ENCODE measurements at regions of chr3 and their contacts with region 1.

Region 1: DNA sequence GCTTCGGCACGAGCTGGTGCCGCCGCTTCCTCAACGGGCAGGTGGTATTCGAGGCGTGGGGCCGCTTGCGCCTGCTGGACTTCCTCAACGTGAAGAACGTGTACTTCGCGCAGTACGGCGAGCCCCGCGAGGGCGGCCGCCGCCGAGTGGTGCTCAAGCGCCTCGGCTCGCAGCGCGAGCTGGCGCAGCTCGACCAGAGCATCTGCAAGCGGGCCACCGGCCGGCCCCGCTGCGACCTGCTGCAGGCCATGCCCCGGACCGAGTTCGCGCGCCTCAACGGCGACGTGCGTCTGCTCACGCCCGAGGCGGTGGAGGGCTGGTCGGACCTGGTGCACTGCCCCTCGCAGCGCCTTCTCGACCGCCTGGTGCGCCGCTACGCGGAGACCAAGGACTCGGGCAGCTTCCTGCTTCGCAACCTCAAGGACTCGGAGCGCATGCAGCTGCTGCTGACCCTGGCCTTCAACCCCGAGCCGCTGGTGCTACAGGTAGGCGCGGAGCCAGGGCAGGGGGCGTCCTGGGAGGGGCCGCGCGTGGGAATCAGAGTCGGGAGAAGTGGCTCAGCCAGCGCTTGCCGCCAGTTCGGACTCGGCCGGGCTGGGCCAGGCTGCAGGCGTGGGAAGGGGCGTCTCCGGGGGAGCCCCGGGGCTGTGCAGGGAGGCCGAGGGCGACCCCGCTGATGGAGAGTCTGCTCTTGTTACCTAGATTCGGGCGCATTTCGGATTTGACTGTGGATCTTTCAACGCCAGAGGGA is 1.1 kb downstream of the DIPK2A start:
- DNase-seq: peak; percentile 74
- ATAC-seq: peak; percentile 15
- H3K4me3 Mint-ChIP-seq: peak overlapping the region; percentile 99
- H3K27ac Mint-ChIP-seq: peak overlapping the region; percentile 99
- H3K4me1 Mint-ChIP-seq: peaks cover 48% of the 10 kb centered on the region
- H3K27me3 Mint-ChIP-seq: no peaks in the 10 kb centered on the region
- CTCF ChIP-seq: no peak

Region 2: DNA sequence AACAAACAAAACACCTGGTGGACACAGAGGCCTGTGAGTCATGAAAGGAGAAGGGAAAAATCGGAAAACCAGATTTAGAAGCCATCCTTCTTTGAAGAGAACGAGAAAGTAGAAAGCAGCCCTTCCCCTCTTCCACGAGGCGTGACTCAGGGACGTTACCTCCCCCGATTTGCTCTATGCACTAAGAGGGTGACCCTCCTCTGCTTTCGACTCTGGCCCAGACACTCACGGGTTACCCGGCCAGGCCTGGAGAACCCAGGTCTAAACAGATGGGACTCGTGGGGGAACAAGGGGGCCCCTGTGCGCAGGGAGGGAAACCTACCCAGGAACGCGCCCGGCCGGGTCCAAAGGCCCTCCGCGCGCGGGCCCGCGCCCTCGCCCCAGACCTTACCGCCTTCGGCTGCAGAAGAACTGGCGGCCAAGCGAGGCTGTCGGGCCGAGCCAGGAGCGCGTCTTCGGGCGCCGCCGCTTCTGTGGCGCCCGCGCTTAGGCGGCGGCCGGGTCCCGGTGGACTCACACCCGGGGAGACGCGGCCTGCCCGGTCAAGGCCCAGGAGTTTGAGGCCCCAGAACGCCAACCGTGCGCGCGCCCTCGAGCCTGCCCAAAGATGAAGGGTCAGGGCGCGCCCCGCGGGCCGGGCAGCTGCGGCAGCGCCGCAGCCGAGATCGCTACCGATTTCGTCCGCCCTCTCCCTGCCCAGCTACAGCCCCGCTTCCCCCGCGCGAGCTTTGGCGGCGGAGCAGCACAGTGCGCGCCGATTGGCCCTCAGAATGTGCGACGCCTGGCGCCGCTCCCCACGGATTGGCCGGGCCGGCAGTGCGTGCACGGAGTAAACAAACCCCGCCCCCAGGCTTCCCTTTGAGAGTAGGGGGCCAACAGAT is 1823.6 kb before region 1 on chr3 and contains the start of gene TFDP2:
- CTCF ChIA-PET with region 1: no interaction called
- POLR2A ChIA-PET with region 1: no interaction called
- intact Hi-C with region 1: loop called (anchors 5 kb)
- DNase-seq: peak; percentile 78
- ATAC-seq: peak; percentile 99
- H3K4me3 Mint-ChIP-seq: peak within 1 kb of the TSS; percentile 86
- H3K27ac Mint-ChIP-seq: peak within 1 kb of the TSS; percentile 72
- H3K4me1 Mint-ChIP-seq: peaks cover 14% of the 10 kb centered on the region
- H3K27me3 Mint-ChIP-seq: no peaks in the 10 kb centered on the region
- CTCF ChIP-seq: no peak
- total RNA-seq, gene TFDP2: 20.0 and 23.1 TPM in 2 replicates

Region 3: DNA sequence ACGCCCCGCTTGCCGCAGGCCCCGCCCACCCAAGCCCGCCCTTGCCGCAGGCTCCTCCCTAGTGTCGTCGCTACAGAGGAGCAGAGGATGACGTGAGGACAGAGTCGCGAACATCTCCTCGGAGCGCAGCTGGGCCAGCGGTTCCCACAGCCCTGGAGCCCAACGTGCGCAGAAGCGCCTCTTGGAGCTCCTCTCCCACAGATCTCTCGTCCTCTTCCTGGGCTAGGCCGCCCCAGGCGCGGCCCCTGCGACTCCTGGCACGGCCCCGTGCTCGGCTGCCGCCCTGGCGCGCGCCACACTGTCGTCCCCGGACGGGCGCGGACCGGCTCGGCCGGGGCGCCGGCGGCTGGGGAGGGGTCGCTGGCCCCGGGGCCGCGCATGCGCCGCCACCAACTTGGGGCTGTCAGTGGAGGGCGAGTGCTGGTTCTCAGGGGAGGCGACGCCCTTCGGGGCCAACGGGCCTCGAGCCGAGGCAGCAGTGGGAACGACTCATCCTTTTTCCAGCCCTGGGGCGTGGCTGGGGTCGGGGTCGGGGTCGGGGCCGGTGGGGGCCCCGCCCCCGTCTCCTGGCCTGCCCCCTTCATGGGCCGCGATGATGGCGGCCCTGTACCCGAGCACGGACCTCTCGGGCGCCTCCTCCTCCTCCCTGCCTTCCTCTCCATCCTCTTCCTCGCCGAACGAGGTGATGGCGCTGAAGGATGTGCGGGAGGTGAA is 1248.6 kb before region 1 on chr3 and contains the start of gene TRPC1:
- CTCF ChIA-PET with region 1: no interaction called
- POLR2A ChIA-PET with region 1: no interaction called
- intact Hi-C with region 1: loop called (anchors 2 kb)
- DNase-seq: peak; percentile 54
- ATAC-seq: peak; percentile 95
- H3K4me3 Mint-ChIP-seq: peak within 1 kb of the TSS; percentile 87
- H3K27ac Mint-ChIP-seq: peak within 1 kb of the TSS; percentile 76
- H3K4me1 Mint-ChIP-seq: peaks cover 5% of the 10 kb centered on the region
- H3K27me3 Mint-ChIP-seq: peaks cover 22% of the 10 kb centered on the region
- CTCF ChIP-seq: no peak
- total RNA-seq, gene TRPC1: 1.2 and 1.3 TPM in 2 replicates

Region 4: GRCh38 chr3:143535994-143536784 is 436.5 kb before region 1 on chr3:
- CTCF ChIA-PET with region 1: no interaction called
- POLR2A ChIA-PET with region 1: no interaction called
- intact Hi-C with region 1: loop called (anchors 1 kb)
- DNase-seq: no peak
- ATAC-seq: peak; percentile 68
- H3K4me3 Mint-ChIP-seq: peak overlapping the region; percentile 64
- H3K27ac Mint-ChIP-seq: peak overlapping the region; percentile 79
- H3K4me1 Mint-ChIP-seq: peaks cover 61% of the 10 kb centered on the region
- H3K27me3 Mint-ChIP-seq: no peaks in the 10 kb centered on the region
- CTCF ChIP-seq: no peak

Region 5: DNA sequence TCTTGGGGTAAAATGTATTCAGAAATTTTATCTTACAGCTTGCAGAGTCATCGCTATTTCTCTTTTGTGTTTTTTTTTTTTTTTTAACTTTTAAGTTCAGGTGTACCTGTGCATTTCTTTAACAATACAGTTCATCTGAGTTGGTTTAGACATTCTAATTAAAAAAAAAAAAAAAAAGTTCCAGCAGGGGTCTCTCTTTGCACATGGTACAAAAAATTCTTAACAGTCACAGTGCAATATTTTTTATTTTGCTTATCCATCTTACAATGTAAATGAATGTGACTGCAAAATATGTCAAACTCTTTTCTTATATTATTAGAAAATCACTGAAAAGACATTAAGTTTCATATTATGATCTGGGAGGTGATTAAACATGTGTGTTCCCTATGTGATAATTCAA is 76.9 kb before region 1 on chr3:
- CTCF ChIA-PET with region 1: interaction called, 14 read pairs
- POLR2A ChIA-PET with region 1: interaction called, 3 read pairs
- intact Hi-C with region 1: loop called (anchors 1 kb)
- DNase-seq: no peak
- ATAC-seq: no peak
- H3K4me3 Mint-ChIP-seq: no peak overlapping the region
- H3K27ac Mint-ChIP-seq: no peak overlapping the region
- H3K4me1 Mint-ChIP-seq: no peaks in the 10 kb centered on the region
- H3K27me3 Mint-ChIP-seq: peaks cover 1% of the 10 kb centered on the region
- CTCF ChIP-seq: peak; percentile 56

Region 6: DNA sequence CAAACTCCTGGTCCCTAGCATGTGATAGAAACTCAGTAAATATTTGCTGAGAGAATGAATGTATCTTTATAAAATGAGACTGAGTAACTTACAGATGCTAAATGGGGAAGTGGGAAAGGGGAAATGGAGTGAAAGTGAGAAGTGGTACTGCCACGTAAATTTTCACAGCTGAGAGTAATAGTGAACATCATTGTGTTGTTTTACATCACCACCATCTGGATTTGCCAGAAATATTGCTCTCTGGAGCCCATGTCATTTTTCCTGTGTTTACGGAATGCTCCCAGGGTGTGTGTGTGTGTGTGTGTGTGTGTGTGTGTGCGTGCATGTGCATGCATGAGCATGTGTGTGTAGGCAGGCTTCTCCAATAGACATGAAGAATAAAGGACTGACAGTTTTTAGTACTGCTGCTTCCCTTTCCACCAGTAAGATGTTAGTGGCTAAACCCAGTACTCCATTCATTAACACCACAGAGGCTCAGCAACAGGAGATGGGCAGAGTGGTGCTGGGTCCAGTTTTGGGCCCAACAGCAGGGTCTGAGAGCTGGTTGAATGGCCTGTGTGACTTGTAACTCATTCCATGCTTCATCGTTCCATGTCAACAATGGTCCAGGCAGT is 56.2 kb after region 1 on chr3:
- CTCF ChIA-PET with region 1: interaction called, 8 read pairs
- POLR2A ChIA-PET with region 1: interaction called, 24 read pairs
- intact Hi-C with region 1: loop called (anchors 1 kb)
- DNase-seq: no peak
- ATAC-seq: peak; percentile 92
- H3K4me3 Mint-ChIP-seq: peak overlapping the region; percentile 44
- H3K27ac Mint-ChIP-seq: peak overlapping the region; percentile 82
- H3K4me1 Mint-ChIP-seq: peaks cover 35% of the 10 kb centered on the region
- H3K27me3 Mint-ChIP-seq: no peaks in the 10 kb centered on the region
- CTCF ChIP-seq: no peak

Region 7: DNA sequence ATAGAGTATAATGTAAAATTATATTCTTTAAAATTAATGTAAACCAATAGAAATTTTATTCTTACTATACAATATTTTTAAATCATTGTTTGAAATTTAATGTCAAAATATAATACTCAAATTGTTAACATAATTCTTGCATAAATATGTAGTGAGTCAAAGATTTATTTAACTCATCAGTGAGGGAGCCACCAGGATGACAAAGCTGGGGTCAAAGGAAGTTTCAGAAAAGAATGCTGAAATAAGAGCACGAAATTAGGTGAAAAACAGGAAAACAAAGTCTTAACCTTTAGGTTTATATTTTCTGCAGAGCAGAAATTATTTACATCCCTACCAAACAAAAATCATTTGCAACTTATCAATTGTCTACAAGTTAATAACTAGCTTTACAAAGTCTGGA is 73.1 kb after region 1 on chr3:
- CTCF ChIA-PET with region 1: no interaction called
- POLR2A ChIA-PET with region 1: no interaction called
- intact Hi-C with region 1: no loop called
- DNase-seq: no peak
- ATAC-seq: no peak
- H3K4me3 Mint-ChIP-seq: no peak overlapping the region
- H3K27ac Mint-ChIP-seq: no peak overlapping the region
- H3K4me1 Mint-ChIP-seq: no peaks in the 10 kb centered on the region
- H3K27me3 Mint-ChIP-seq: peaks cover 21% of the 10 kb centered on the region
- CTCF ChIP-seq: no peak

Region 8: DNA sequence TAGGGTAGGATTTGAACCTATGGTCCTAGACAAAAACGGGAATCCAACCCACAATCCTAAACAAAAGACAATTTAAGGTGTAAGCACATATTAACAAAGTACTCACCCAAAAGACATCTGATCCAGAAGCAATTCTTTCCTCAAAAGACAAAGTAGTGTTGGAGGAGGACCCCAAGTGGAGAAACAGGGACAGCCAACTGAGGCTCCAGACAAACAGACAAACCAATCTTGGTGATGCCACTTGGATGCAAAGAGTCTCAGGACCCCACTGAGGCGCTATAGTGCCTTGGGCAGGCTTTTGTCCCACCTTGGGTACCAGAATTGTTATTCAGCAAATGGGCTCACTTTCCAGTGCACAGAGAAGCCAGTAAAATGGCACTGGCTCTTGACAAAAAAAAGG is 612.7 kb after region 1 on chr3:
- CTCF ChIA-PET with region 1: no interaction called
- POLR2A ChIA-PET with region 1: no interaction called
- intact Hi-C with region 1: loop called (anchors 1 kb)
- DNase-seq: no peak
- ATAC-seq: no peak
- H3K4me3 Mint-ChIP-seq: no peak overlapping the region
- H3K27ac Mint-ChIP-seq: no peak overlapping the region
- H3K4me1 Mint-ChIP-seq: no peaks in the 10 kb centered on the region
- H3K27me3 Mint-ChIP-seq: no peaks in the 10 kb centered on the region
- CTCF ChIP-seq: no peak

Region 9: DNA sequence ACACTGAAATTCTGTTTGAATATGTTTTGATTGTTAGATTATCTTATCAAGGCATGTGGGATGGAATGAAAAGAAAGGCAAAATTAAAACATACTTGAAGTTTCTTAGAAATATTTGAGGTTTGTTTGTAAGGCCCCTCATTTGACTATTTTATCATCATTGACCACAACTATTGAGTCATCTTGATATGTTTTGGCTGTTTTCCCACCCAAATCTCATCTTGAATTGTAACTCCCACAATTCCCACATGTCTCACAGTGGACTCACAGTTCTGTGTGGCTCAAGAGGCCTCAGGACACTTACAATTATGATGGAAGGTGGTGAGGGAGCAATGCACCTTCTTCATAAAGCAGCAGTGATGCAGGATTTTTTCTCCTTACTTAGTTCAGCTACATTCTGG is 1271.2 kb after region 1 on chr3:
- CTCF ChIA-PET with region 1: no interaction called
- POLR2A ChIA-PET with region 1: no interaction called
- intact Hi-C with region 1: no loop called
- DNase-seq: no peak
- ATAC-seq: no peak
- H3K4me3 Mint-ChIP-seq: no peak overlapping the region
- H3K27ac Mint-ChIP-seq: no peak overlapping the region
- H3K4me1 Mint-ChIP-seq: no peaks in the 10 kb centered on the region
- H3K27me3 Mint-ChIP-seq: no peaks in the 10 kb centered on the region
- CTCF ChIP-seq: no peak

Region 10: GRCh38 chr3:145739926-145740325 is 1767.2 kb after region 1 on chr3:
- CTCF ChIA-PET with region 1: no interaction called
- POLR2A ChIA-PET with region 1: no interaction called
- intact Hi-C with region 1: no loop called
- DNase-seq: no peak
- ATAC-seq: no peak
- H3K4me3 Mint-ChIP-seq: no peak overlapping the region
- H3K27ac Mint-ChIP-seq: no peak overlapping the region
- H3K4me1 Mint-ChIP-seq: no peaks in the 10 kb centered on the region
- H3K27me3 Mint-ChIP-seq: no peaks in the 10 kb centered on the region
- CTCF ChIP-seq: no peak